Activated T-helper 2 cell treated with anti-CD3 and anti-CD28 coated beads, Interferon-gamma antibody, Interleukin-2, Interleukin-4, amounts not matched to agents 10 μg/mL and 5 μg/mL and 100 μg/mL, durations not matched to agents 14 hours and 24 hours and 36 hours (primary cell): ENCODE measurements at regions of chr12 and their contacts with region 1.

Region 1: GRCh38 chr12:76183459-76184186 is 99.1 kb upstream of the NAP1L1 start:
- DNase-seq: peak; percentile 14
- H3K4me3 Mint-ChIP-seq: no peak overlapping the region
- H3K27ac Mint-ChIP-seq: no peak overlapping the region
- H3K4me1 Mint-ChIP-seq: peaks cover 30% of the 10 kb centered on the region
- H3K27me3 Mint-ChIP-seq: peaks cover 37% of the 10 kb centered on the region

Region 2: DNA sequence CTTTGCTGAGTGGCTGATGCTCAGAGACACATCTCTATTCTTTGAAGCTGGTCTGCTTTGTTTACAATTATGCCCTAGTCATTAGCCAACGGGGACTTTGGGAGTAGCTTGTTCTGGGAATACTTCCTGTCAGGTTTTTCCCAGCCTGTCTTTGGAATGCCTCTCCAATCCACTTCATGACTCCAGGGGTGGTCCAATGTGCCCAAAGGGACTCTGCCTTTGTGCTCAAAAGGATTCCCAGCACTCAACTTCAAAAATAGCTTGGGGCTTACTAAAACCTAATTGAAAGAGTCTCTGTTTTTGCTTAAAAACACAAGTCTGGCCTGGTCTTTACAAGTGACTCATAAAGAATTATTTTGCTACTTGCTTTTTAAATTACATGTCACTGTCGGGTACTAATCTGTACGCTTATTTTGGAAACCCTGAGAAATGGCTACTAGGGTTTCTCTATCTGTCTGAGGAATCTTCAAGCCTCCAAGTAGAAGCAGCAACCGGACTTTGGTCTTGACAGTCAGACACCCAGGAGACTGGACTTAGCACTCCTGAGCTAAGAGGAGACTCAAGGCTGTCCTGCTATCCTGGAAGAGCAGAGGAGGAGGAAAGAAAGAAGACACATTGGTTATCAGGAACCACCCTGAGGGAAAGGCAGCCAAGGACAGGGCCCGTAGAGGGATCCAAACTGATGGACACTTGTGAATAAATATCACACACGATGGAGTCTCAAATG is 172.7 kb before region 1 on chr12:
- intact Hi-C with region 1: no loop called
- DNase-seq: no peak
- H3K4me3 Mint-ChIP-seq: no peak overlapping the region
- H3K27ac Mint-ChIP-seq: no peak overlapping the region
- H3K4me1 Mint-ChIP-seq: peaks cover 13% of the 10 kb centered on the region
- H3K27me3 Mint-ChIP-seq: no peaks in the 10 kb centered on the region

Region 3: DNA sequence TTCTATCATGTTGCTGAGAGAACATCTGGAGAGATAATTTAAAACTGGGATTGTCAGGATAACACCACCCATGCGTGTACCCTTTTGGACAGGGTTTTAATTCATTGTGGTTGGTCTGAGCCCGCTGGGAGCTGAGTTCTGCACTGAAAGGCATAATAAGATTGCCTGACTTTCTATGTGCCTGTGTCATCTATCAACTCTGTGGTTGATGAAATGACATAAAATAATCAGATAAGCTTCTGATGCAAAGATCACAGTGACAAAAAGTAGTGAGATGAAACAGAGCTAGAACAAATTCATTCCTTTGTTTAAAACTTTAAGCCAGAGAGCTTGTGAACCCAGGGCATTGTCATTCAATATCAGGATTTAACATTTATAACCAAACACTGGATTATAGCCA is 65.9 kb after region 1 on chr12:
- intact Hi-C with region 1: loop called (anchors 2 kb)
- DNase-seq: no peak
- H3K4me3 Mint-ChIP-seq: no peak overlapping the region
- H3K27ac Mint-ChIP-seq: no peak overlapping the region
- H3K4me1 Mint-ChIP-seq: peaks cover 15% of the 10 kb centered on the region
- H3K27me3 Mint-ChIP-seq: peaks cover 36% of the 10 kb centered on the region

Region 4: GRCh38 chr12:76277480-76277879 is 93.9 kb after region 1 on chr12:
- intact Hi-C with region 1: loop called (anchors 2 kb)
- DNase-seq: no peak
- H3K4me3 Mint-ChIP-seq: no peak overlapping the region
- H3K27ac Mint-ChIP-seq: no peak overlapping the region
- H3K4me1 Mint-ChIP-seq: peaks cover 14% of the 10 kb centered on the region
- H3K27me3 Mint-ChIP-seq: peaks cover 9% of the 10 kb centered on the region